Activated CD8-positive, alpha-beta memory T cell treated with anti-CD3 and anti-CD28 coated beads, Interleukin-2, amount 10 ng/mL, durations not matched to agents 7 days and 5 days (primary cell): ENCODE measurements at regions of chr22 and their contacts with region 1.

Region 1: GRCh38 chr22:50544078-50544745 is 1.5 kb upstream of the KLHDC7B start:
- DNase-seq: peak; percentile 93
- ATAC-seq: peak; percentile 51
- H3K4me3 Mint-ChIP-seq: peak overlapping the region; percentile 49
- H3K27ac Mint-ChIP-seq: peak overlapping the region; percentile 92
- H3K4me1 Mint-ChIP-seq: peaks cover 65% of the 10 kb centered on the region
- H3K27me3 Mint-ChIP-seq: no peaks in the 10 kb centered on the region

Region 2: GRCh38 chr22:50530877-50531545 is 13.2 kb before region 1 on chr22:
- CTCF ChIA-PET with region 1: interaction called, 55 read pairs
- DNase-seq: peak; percentile 95
- ATAC-seq: peak; percentile 49
- H3K4me3 Mint-ChIP-seq: peak overlapping the region; percentile 94
- H3K27ac Mint-ChIP-seq: peak overlapping the region; percentile 100
- H3K4me1 Mint-ChIP-seq: peaks cover 52% of the 10 kb centered on the region
- H3K27me3 Mint-ChIP-seq: no peaks in the 10 kb centered on the region

Region 3: DNA sequence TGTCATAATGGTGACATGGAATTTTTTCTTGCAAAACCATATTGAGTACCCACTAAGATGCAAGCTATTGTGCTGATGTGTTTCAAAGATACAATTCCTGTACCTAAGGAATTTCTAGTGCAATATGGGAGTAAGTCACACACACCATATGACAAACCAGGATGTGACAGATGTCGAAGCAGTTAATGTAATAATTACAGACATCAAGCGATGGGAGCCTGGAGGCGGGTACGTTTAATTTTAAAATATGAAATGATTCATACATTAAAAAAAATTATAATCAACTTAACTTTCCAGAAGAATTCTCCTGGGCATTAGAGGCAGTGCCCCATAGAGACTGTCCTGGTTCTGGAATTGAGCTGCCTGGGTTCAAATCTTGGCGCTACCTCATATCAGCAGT is 12.5 kb after region 1 on chr22:
- CTCF ChIA-PET with region 1: interaction called, 12 read pairs
- DNase-seq: no peak
- ATAC-seq: no peak
- H3K4me3 Mint-ChIP-seq: no peak overlapping the region
- H3K27ac Mint-ChIP-seq: no peak overlapping the region
- H3K4me1 Mint-ChIP-seq: peaks cover 8% of the 10 kb centered on the region
- H3K27me3 Mint-ChIP-seq: peaks cover 6% of the 10 kb centered on the region